Activated CD4-positive, alpha-beta memory T cell treated with anti-CD3 and anti-CD28 coated beads, Interleukin-2, amount 10 ng/mL, durations not matched to agents 7 days and 5 days (primary cell): ENCODE measurements at regions of chr11 and their contacts with region 1.

Region 1: DNA sequence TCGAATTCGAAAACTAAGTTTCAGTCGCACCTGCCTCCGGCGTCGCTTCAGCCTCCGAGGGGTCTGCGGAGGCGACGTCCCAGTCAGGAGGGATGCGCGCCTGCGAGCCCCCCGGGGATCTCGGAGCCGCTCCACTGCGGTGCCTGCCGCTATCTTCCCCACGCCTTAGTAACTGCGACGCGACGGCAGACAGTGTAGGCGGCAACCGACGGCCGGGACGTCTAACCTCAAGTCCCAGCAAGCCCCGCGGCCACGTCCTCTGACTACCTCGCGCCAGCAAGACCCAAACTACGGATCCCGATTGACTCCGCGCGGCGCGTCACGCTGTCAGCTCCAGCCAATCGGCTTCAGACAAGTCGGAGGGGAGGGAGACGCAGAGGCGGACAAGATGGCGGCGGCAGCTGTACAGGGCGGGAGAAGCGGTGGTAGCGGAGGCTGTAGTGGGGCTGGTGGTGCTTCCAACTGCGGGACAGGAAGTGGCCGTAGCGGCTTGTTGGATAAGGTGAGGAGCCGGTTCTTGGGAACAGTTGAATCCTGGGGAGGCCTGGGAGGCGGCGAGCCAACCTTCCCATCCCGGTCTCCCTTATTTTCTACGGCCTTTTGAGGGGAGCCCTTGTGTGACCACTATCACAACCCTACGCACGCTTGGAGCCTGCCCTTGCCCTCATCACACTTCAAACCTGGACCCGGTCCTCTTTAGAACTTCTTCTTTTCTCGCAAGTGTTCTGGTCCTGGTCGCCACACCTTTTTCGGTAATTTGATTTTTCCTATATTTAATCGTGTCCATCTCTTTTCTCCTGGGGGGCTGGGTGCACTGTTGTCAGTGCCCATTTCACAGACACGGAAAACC is at the starts of genes SPCS2 and XRRA1:
- DNase-seq: peak; percentile 99
- H3K4me3 Mint-ChIP-seq: peak within 1 kb of the TSS; percentile 95
- H3K27ac Mint-ChIP-seq: peak within 1 kb of the TSS; percentile 89
- H3K4me1 Mint-ChIP-seq: peaks cover 43% of the 10 kb centered on the region
- H3K27me3 Mint-ChIP-seq: no peaks in the 10 kb centered on the region
- total RNA-seq, gene SPCS2: 194 to 198 TPM
- total RNA-seq, gene XRRA1: 10.3 to 10.9 TPM

Region 2: GRCh38 chr11:74937696-74938475 is 11.2 kb before region 1 on chr11:
- CTCF ChIA-PET with region 1: interaction called, 3 read pairs
- POLR2A ChIA-PET with region 1: interaction called, 12 read pairs
- DNase-seq: no peak
- H3K4me3 Mint-ChIP-seq: no peak overlapping the region
- H3K27ac Mint-ChIP-seq: no peak overlapping the region
- H3K4me1 Mint-ChIP-seq: peaks cover 13% of the 10 kb centered on the region
- H3K27me3 Mint-ChIP-seq: no peaks in the 10 kb centered on the region